Spleen (tissue), 13 donors: ENCODE measurements at regions of chr1 and their contacts with region 1.

Region 1: GRCh38 chr1:93846211-93846991 is 32.6 kb downstream of the DNTTIP2 start:
- DNase-seq: peak; percentile 98
- H3K4me3 ChIP-seq: peak overlapping the region; percentile 37 to 94 (median 80)
- H3K27ac ChIP-seq: peak overlapping the region; percentile 97 to 100 (median 98)
- H3K4me1 ChIP-seq: peaks cover 8 to 42% (median 29%) of the 10 kb centered on the region in 6 donors
- H3K27me3 ChIP-seq: no peaks in the 10 kb centered on the region
- CTCF ChIP-seq: peak; percentile 17 to 75 (median 40)
- POLR2A ChIP-seq: peak in 2 of 3 donors; percentile 11 to 60

Region 2: GRCh38 chr1:93447516-93448291 is 398.7 kb before region 1 on chr1 and contains the start of gene FNBP1L:
- intact Hi-C with region 1: loop called (anchors 5 kb)
- DNase-seq: peak; percentile 90
- H3K4me3 ChIP-seq: peak within 1 kb of the TSS; percentile 65 to 93 (median 71)
- H3K27ac ChIP-seq: peak within 1 kb of the TSS in 6 of 8 donors; percentile 29 to 70 (median 51)
- H3K4me1 ChIP-seq: peaks cover 0 to 41% (median 30%) of the 10 kb centered on the region in 6 donors
- H3K27me3 ChIP-seq: peaks cover 0 to 73% (median 48%) of the 10 kb centered on the region in 7 donors
- CTCF ChIP-seq: no peak
- POLR2A ChIP-seq: no peak
- total RNA-seq, gene FNBP1L: 4.7 to 10.0 (median 6.6) TPM

Region 3: GRCh38 chr1:93944656-93945055 is 98.3 kb after region 1 on chr1:
- intact Hi-C with region 1: no loop called
- DNase-seq: no peak
- H3K4me3 ChIP-seq: no peak overlapping the region
- H3K27ac ChIP-seq: no peak overlapping the region
- H3K4me1 ChIP-seq: no peaks in the 10 kb centered on the region
- H3K27me3 ChIP-seq: no peaks in the 10 kb centered on the region
- CTCF ChIP-seq: no peak
- POLR2A ChIP-seq: no peak